ENCODE measurements at regions of chr22 and their contacts with region 1.

Region 1: DNA sequence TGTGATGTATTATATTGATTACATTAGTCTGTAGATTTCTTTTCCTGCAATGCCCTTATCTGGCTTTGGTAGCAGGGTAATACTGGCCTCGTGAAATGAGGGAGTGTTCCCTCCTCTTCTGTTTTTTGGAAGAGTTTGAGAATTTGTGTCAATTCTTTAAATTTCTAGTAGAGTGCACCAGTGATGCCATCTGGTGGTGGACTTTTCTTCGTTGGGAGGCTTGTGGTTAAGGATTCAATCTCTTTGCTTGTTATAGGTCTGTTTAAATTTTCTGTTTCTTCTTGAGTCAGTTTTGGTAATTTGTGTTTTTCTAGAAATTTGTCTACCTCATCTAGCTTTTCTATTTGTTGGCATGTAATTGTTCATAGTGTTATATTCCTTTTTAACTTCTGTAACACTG is 18.9 kb downstream of the SHANK3 start:
- DNase-seq: peak in 1 of 2 experiments; percentile 42
- ATAC-seq: no peak
- H3K4me3 ChIP-seq: no peak overlapping the region
- H3K27ac ChIP-seq: no peak overlapping the region
- H3K4me1 ChIP-seq: no peaks in the 10 kb centered on the region
- CTCF ChIP-seq: peak; percentile 50
- EP300 ChIP-seq: no peak
- POLR2A ChIP-seq: no peak
- RAD21 ChIP-seq: peak; percentile 50 to 65

Region 2: GRCh38 chr22:50612528-50613221 is 78.8 kb before region 1 on chr22:
- CTCF ChIA-PET with region 1: no interaction called
- POLR2A ChIA-PET with region 1: no interaction called
- DNase-seq: no peak
- ATAC-seq: peak; percentile 41 to 62; a peak in 4 of 6 replicates
- H3K4me3 ChIP-seq: no peak overlapping the region
- H3K27ac ChIP-seq: no peak overlapping the region
- H3K4me1 ChIP-seq: no peaks in the 10 kb centered on the region
- CTCF ChIP-seq: no peak
- EP300 ChIP-seq: no peak
- POLR2A ChIP-seq: no peak
- RAD21 ChIP-seq: no peak

Region 3: DNA sequence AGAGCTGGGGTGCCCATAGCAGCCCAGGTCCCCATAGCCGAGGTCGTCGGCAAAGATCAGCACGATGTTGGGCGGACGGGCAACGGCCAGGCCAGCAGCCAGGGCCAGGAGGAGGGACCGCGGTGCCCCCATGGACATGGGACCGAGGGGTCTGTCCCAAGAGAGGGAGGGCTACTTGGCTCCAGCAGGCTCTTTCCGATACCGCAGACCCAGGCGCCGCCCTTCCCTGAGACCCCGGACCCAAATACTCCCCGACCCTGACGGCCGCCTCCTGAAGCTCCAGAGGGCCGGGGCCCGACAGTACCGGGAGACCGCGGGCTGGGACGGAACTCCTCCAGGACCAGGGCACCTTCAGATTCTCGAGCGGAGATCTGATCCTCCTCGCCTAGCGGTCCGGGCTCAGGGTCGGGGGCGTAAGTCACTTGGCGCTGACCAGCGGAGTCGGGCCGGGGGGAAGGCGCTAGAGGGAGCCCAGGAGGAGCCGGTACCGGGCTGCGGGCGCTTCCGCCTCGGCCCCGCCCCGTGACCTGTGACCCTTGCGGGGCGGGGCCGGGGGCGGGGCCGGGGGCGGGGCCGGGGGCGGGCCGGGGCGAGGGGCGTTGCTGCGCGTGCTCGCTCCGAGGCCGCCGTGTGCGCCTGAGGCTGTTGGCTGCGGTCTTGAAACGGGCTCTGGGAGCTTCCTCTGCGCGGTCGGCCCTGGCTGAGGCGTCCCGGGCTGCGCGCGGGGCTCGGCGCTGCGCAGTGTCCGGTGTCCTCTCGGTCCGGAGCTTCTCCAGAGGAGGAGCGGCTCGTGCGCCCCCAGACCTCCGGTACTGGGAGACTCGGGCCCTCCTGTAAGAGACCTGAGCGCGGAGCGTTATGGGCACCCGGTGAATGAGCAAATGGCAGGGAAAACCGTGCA is 63.6 kb before region 1 on chr22 and contains the start of gene ARSA:
- CTCF ChIA-PET with region 1: interaction called, 11 read pairs
- POLR2A ChIA-PET with region 1: no interaction called
- DNase-seq: peak in 1 of 2 experiments; percentile 56
- ATAC-seq: peak; percentile 81 to 83
- H3K4me3 ChIP-seq: peak within 1 kb of the TSS; percentile 62
- H3K27ac ChIP-seq: peak within 1 kb of the TSS; percentile 72 to 97
- H3K4me1 ChIP-seq: peaks cover 10% of the 10 kb centered on the region; the same call in 2 of the 3 replicates
- CTCF ChIP-seq: peak; percentile 32; the same call in 2 of the 3 replicates
- EP300 ChIP-seq: no peak
- POLR2A ChIP-seq: peak; percentile 55
- RAD21 ChIP-seq: peak in 1 of 2 experiments; percentile 31; a peak in 1 of 5 replicates
- polyA plus RNA-seq, gene ARSA: 7.7 and 9.1 TPM in 2 replicates

Region 4: GRCh38 chr22:50670513-50670912 is 21.0 kb before region 1 on chr22:
- CTCF ChIA-PET with region 1: interaction called, 10 read pairs
- POLR2A ChIA-PET with region 1: no interaction called
- DNase-seq: no peak
- ATAC-seq: peak in 1 of 2 experiments; percentile 9; a peak in 1 of 6 replicates
- H3K4me3 ChIP-seq: no peak overlapping the region
- H3K27ac ChIP-seq: no peak overlapping the region
- H3K4me1 ChIP-seq: 0 out of 3 replicates have a peak, but pooled peaks cover 6% of the 10 kb centered on the region
- CTCF ChIP-seq: no peak
- EP300 ChIP-seq: no peak
- POLR2A ChIP-seq: no peak
- RAD21 ChIP-seq: no peak

Region 5: GRCh38 chr22:50717709-50718351 is 26.3 kb after region 1 on chr22:
- CTCF ChIA-PET with region 1: no interaction called
- POLR2A ChIA-PET with region 1: no interaction called
- DNase-seq: no peak
- ATAC-seq: no peak; a peak in 1 of 6 replicates
- H3K4me3 ChIP-seq: no peak overlapping the region
- H3K27ac ChIP-seq: no peak overlapping the region
- H3K4me1 ChIP-seq: no peaks in the 10 kb centered on the region
- CTCF ChIP-seq: no peak
- EP300 ChIP-seq: no peak
- POLR2A ChIP-seq: no peak
- RAD21 ChIP-seq: no peak

Measured in A549 (cell line).